Breast epithelium (tissue), 4 donors: ENCODE measurements at regions of chr6 and their contacts with region 1.

Region 1: DNA sequence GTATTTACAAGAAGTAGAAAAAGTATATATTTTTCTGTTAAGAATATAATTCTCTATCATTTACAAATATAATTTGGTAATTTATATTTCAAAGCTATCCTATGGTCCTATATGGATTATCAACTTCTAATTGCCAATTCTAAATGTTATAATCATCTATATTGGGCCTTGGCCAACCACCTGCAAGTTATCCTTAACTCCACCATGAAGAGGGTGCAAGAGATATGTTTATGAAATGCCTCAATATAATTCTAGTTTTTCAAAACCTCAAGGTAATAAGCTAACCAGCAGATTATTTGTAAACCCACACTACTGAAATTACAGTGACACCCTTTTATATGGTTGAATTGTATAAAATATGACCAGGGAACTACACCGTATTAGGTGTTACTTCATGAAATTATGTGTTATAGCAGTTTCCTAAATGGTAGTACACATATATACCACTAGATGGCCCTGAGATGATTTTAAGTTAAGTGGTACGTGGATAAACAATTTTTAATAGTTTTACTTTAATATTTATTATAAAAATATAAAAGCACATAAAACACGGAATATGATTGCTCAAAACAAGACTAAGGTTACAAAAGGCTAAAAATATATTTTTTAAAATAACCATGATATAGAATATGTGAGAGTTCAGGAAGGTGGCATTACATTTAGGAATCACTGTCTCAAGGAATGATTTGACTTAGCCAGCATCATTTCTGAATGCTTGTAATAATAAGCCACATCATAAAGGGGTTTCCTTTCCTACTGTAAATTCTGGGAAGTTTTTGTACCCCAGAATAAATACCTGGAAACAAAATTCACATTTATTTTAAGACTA is 9.8 kb upstream of the PNISR start:
- DNase-seq: no peak
- H3K4me3 ChIP-seq: no peak overlapping the region
- H3K27ac ChIP-seq: no peak overlapping the region
- H3K4me1 ChIP-seq: no peaks in the 10 kb centered on the region
- H3K27me3 ChIP-seq: no peaks in the 10 kb centered on the region
- CTCF ChIP-seq: peak; percentile 37 to 53 (median 41)
- POLR2A ChIP-seq: no peak

Region 2: DNA sequence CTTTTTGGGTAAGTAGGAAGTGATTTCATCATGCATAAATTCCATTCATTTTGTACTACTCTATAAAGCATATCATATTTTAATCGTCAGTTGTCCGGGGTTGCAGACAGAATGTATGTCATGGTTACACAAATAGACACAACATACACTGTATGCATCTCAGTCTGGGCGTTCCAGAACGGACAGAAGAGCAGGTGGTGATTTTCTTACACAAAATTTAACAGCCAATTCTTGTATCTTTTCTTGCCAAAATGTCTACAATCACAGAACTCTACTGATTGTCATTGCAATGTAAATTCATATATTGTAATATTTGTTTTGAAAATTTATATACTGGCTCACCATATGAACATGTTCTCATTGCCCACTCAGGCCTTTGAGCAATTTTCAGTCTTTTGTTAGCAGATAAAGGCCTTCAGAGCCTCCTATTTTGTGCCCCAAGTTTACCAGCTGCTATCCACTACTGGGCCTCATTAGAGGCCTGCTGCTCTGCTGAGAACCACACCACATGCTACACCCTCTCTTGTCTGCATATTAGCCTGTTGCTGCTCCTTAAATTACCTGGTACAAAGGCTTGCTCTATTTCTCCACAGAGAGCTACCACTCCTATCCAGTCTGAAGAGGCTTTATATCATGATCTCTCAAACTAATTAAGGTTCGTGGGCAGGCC is 233.3 kb after region 1 on chr6:
- intact Hi-C with region 1: loop called (anchors 5 kb)
- DNase-seq: no peak
- H3K4me3 ChIP-seq: no peak overlapping the region
- H3K27ac ChIP-seq: no peak overlapping the region
- H3K4me1 ChIP-seq: no peaks in the 10 kb centered on the region
- H3K27me3 ChIP-seq: no peaks in the 10 kb centered on the region
- CTCF ChIP-seq: no peak
- POLR2A ChIP-seq: no peak